CD4-positive, alpha-beta memory T cell (primary cell): ENCODE measurements at regions of chr11 and their contacts with region 1.

Region 1: GRCh38 chr11:117985953-117986887 is at the start of gene IL10RA:
- DNase-seq: peak; percentile 82 to 85 (median 84)
- H3K4me3 ChIP-seq: peak within 1 kb of the TSS; percentile 97 to 99
- H3K4me3 Mint-ChIP-seq: peak within 1 kb of the TSS; percentile 91 to 100 (median 94)
- H3K27ac ChIP-seq: peak within 1 kb of the TSS; percentile 98
- H3K27ac Mint-ChIP-seq: peak within 1 kb of the TSS; percentile 89 to 98 (median 96)
- H3K4me1 ChIP-seq: peaks cover 60% of the 10 kb centered on the region
- H3K4me1 Mint-ChIP-seq: peaks cover 41 to 86% (median 57%) of the 10 kb centered on the region in 4 donors
- H3K27me3 ChIP-seq: no peaks in the 10 kb centered on the region
- H3K27me3 Mint-ChIP-seq: no peaks in the 10 kb centered on the region
- total RNA-seq, gene IL10RA: 398 to 406 TPM

Region 2: DNA sequence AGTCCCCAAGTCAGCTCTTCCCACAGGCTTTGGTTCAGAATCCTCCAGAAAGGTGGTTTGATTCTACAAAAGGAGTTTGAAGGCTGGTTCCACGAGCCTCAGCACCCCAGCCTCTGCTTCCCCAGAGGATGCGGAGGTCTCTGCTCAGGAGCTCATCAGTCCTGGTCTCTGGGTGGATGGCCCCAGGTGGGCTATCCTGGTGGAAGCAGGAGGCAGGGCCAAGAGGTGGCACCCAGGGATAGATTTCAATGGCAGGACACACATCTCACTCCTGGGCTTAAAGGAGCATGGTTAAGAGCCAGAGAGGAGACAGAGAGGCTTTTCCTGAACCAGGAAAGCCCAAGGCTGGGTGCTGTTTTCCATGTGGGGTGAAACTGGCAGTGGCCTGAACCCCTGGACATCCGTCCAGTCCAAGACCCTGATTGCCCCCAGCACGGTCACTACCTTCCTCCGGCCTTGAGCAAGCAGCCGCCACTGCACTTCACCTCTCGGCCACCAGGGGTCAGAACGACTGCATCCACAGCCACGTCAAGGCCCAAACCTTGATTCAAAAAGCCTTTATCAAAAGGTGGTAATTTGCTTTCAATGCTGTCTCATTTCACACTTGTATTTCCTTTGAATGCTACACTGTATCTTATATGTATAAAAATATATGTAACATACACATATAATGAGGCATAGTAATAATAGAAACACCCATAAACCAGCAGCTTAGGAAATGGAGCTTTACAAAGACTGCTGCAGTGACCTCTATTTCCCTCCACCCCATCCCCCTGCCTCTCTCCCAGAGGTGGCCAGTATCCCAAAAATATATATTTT is 142.3 kb before region 1 on chr11:
- CTCF ChIA-PET with region 1: interaction called, 16 read pairs
- POLR2A ChIA-PET with region 1: interaction called, 3 read pairs
- intact Hi-C with region 1: no loop called
- DNase-seq: peak; percentile 72 to 79 (median 76)
- H3K4me3 ChIP-seq: no peak overlapping the region
- H3K4me3 Mint-ChIP-seq: no peak overlapping the region
- H3K27ac ChIP-seq: no peak overlapping the region
- H3K27ac Mint-ChIP-seq: peak overlapping the region in 2 of 7 donors; percentile 56 to 79
- H3K4me1 ChIP-seq: peaks cover 4% of the 10 kb centered on the region
- H3K4me1 Mint-ChIP-seq: peaks cover 0 to 8% (median 2%) of the 10 kb centered on the region in 4 donors
- H3K27me3 ChIP-seq: no peaks in the 10 kb centered on the region
- H3K27me3 Mint-ChIP-seq: no peaks in the 10 kb centered on the region

Region 3: DNA sequence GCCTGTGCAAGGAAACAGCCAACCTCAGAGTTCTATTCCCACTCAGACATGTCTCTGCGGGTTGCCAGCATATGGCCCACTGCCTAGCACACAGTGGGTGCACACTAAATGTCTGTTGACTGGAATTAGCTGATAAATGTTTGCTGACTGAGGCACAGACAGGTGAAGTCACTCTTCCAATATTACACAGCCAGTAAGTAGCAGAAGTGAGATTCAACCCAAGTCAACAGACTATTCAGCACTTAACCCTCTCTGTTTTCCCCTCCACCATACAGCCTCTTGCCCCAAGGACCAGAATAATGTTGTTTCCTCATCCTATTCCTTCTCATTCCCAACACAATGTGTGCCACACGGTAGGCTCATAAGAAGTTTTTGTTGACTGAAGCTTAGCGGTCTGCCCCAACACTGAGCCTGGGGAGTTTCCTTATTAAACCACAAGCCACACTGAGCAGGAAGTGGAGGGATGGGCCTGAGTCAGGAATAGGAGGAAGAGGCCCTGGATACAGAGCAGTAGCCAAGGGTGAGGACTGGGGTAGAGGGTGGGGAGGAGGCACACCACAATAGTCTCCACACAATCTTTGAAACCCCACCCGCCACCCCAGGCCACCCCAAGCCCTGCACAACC is 15.7 kb before region 1 on chr11:
- CTCF ChIA-PET with region 1: interaction called, 4 read pairs
- POLR2A ChIA-PET with region 1: interaction called, 2,125 read pairs
- intact Hi-C with region 1: loop called (anchors 2 kb)
- DNase-seq: peak; percentile 33 to 75 (median 43)
- H3K4me3 ChIP-seq: peak overlapping the region; percentile 17 to 21
- H3K4me3 Mint-ChIP-seq: peak overlapping the region in 7 of 8 donors; percentile 59 to 89 (median 76)
- H3K27ac ChIP-seq: peak overlapping the region; percentile 27
- H3K27ac Mint-ChIP-seq: peak overlapping the region; percentile 76 to 91 (median 87)
- H3K4me1 ChIP-seq: peaks cover 66% of the 10 kb centered on the region
- H3K4me1 Mint-ChIP-seq: peaks cover 49 to 69% (median 62%) of the 10 kb centered on the region in 4 donors
- H3K27me3 ChIP-seq: no peaks in the 10 kb centered on the region
- H3K27me3 Mint-ChIP-seq: no peaks in the 10 kb centered on the region

Region 4: DNA sequence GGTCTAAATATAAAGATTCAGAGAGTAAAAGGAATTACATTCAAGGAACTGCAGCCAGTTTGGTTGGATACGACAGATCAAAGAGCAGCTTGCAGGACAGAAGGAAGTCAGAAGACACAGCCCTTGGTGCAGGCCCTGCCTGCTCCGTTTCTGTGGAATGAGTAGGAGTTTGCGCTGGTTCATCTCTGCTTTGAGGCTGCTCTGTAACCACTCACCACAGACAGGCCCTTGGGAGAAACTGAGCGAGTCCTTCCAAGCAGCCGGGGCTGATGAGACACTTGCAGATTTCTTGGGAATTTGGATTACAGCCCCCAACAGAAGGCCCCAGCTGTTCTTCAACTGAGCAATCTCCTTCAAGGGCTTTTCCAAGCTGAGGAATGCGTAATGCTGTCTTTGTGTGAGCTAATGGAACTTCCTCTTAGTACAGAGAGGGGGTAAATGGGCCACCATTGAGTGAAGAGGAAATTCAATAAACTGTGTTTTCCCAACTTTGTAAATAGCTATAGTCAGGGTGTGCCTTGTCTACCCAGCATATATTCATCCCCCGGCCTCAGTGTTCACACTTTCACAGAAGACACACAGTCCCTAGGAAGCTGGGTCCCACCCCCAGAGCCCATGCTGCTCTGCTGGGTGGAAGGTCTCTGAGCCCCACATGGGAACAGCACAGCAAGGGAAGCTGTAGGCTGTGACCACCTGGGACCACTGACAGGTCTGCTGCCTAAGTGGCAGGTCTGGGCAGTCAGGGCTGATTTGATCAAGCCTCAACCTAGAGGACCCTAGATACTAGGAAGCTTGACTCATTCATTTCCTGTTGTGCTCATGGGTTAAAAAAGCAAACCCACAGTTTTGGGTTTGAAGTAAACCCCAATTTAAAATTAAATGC is 16.6 kb after region 1 on chr11:
- CTCF ChIA-PET with region 1: interaction called, 64 read pairs
- POLR2A ChIA-PET with region 1: interaction called, 2,125 read pairs
- intact Hi-C with region 1: loop called (anchors 2 kb)
- DNase-seq: peak; percentile 26 to 68 (median 32)
- H3K4me3 ChIP-seq: peak overlapping the region; percentile 5 to 14
- H3K4me3 Mint-ChIP-seq: peak overlapping the region; percentile 56 to 82 (median 70)
- H3K27ac ChIP-seq: peak overlapping the region; percentile 53
- H3K27ac Mint-ChIP-seq: peak overlapping the region; percentile 86 to 96 (median 91)
- H3K4me1 ChIP-seq: peaks cover 100% of the 10 kb centered on the region
- H3K4me1 Mint-ChIP-seq: peaks cover 76 to 100% (median 95%) of the 10 kb centered on the region in 4 donors
- H3K27me3 ChIP-seq: no peaks in the 10 kb centered on the region
- H3K27me3 Mint-ChIP-seq: no peaks in the 10 kb centered on the region

Region 5: GRCh38 chr11:118046051-118046963 is 60.1 kb after region 1 on chr11:
- CTCF ChIA-PET with region 1: interaction called, 211 read pairs
- POLR2A ChIA-PET with region 1: interaction called, 1,775 read pairs
- intact Hi-C with region 1: loop called (anchors 1 kb)
- DNase-seq: peak; percentile 66 to 83 (median 72)
- H3K4me3 ChIP-seq: peak overlapping the region in 1 of 2 donors; percentile 15
- H3K4me3 Mint-ChIP-seq: peak overlapping the region in 7 of 8 donors; percentile 17 to 82 (median 57)
- H3K27ac ChIP-seq: peak overlapping the region; percentile 75
- H3K27ac Mint-ChIP-seq: peak overlapping the region; percentile 81 to 99 (median 94)
- H3K4me1 ChIP-seq: peaks cover 99% of the 10 kb centered on the region
- H3K4me1 Mint-ChIP-seq: peaks cover 68 to 96% (median 85%) of the 10 kb centered on the region in 4 donors
- H3K27me3 ChIP-seq: no peaks in the 10 kb centered on the region
- H3K27me3 Mint-ChIP-seq: no peaks in the 10 kb centered on the region